ENCODE measurements at regions of chr1 and their contacts with region 1.

Region 1: GRCh38 chr1:37458528-37458927 is 15.9 kb upstream of the ZC3H12A start:
- DNase-seq: no peak

Region 2: DNA sequence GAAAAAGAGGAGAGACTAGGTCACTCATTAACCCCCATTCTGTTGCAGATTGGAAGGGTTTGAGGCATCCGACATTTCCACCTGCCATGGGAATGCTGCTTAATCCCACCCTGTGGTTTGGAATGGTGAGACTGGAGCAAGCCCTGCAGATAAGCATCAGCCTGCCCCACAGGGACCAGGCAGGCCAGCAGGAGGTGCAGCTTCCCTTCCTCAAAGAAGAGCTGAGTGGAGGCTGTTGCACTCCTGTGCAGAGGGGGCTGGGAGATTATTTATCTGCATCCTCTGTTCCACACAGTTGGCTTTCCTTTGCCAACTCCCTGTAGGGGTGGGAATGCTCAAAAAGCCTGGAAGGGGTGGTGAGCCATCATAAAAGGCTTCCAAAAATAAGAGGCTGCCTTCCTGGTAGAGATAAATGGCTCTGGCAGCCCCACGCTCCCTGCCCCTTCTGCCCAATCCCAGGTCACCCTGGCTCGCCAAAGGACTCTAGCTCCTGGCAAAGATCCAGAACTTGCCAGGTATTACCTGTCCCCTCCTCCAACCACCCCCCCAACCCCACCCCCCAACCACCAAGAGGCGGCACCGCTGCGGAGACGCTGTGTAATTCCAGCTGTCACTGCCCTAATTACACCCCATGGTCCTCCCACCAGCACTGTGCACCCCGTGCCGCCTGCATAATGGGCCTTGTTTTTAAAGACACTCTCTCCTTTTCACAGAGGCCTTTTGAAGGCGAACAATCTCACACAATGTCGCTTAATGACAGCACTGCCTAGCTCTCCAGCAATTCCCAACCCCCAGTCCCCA is 67.1 kb before region 1 on chr1:
- intact Hi-C with region 1: no loop called
- DNase-seq: peak in 35 of 42 donors; percentile 22 to 75 (median 44)

Region 3: GRCh38 chr1:37486680-37487618 is 28.4 kb after region 1 on chr1:
- intact Hi-C with region 1: loop called (anchors 2 kb)
- DNase-seq: peak; percentile 49 to 91 (median 77)

Region 4: GRCh38 chr1:37682334-37682987 is 223.9 kb after region 1 on chr1:
- intact Hi-C with region 1: loop called (anchors 5 kb)
- DNase-seq: peak; percentile 26 to 93 (median 83)